ENCODE measurements at regions of chr12 and their contacts with region 1.

Region 1: GRCh38 chr12:124453419-124454351 is 113.7 kb downstream of the NCOR2 start:
- H3K4me3 Mint-ChIP-seq: peak overlapping the region; percentile 39
- H3K27ac Mint-ChIP-seq: peak overlapping the region; percentile 75
- H3K4me1 Mint-ChIP-seq: peaks cover 69% of the 10 kb centered on the region
- H3K27me3 Mint-ChIP-seq: no peaks in the 10 kb centered on the region

Region 2: DNA sequence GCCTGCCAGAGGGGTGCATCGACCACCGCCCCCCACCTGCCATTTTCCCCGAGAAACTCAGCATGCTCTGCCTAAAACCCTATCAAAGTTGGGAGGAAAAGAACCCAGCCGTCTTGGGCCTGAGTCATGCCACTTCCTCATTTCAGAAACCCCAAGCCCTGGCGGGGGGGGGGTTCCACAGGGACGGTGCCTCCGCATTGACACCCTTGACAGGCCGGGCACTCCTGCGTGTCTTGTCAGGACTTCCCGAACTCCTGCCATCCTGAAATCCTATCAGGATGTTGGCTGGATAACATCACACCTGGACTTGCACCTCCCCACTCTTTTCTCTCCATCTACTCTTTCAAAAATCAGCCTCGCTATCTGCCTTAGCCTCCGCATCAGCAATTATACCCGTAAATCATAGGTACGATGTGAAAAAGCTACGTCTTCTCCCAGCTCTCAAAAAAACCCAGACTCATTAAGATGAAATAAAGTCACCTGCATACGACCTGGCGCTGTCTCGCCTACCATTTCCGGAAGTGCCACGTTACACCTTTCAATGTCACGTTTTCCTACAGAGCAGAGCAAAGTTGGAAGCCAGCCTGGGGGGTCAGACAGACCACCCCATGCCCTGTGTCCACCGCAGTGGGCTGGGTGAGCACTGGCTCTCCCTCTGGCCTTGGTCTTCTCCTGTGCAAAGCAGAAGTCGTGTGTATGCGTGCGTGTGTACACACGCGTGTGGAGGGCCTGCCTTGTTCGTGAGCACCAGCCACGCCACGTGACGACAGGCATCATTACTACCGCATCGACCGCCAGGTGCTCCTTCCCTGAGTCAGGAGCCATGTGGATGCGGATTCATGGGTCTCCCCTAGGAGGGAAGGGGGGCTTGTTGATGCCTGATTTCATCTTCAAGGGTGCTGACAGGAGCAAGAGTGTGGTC is 62.1 kb before region 1 on chr12:
- intact Hi-C with region 1: loop called (anchors 5 kb)
- H3K4me3 Mint-ChIP-seq: peak overlapping the region; percentile 99
- H3K27ac Mint-ChIP-seq: peak overlapping the region; percentile 94
- H3K4me1 Mint-ChIP-seq: peaks cover 94% of the 10 kb centered on the region
- H3K27me3 Mint-ChIP-seq: no peaks in the 10 kb centered on the region

Region 3: GRCh38 chr12:124506145-124506831 is 52.6 kb after region 1 on chr12:
- intact Hi-C with region 1: loop called (anchors 5 kb)
- H3K4me3 Mint-ChIP-seq: peak overlapping the region; percentile 75
- H3K27ac Mint-ChIP-seq: peak overlapping the region; percentile 92
- H3K4me1 Mint-ChIP-seq: peaks cover 96% of the 10 kb centered on the region
- H3K27me3 Mint-ChIP-seq: no peaks in the 10 kb centered on the region

Region 4: GRCh38 chr12:124551268-124552144 is 97.8 kb after region 1 on chr12:
- intact Hi-C with region 1: loop called (anchors 1 kb)
- H3K4me3 Mint-ChIP-seq: peak overlapping the region; percentile 78
- H3K27ac Mint-ChIP-seq: peak overlapping the region; percentile 98
- H3K4me1 Mint-ChIP-seq: peaks cover 100% of the 10 kb centered on the region
- H3K27me3 Mint-ChIP-seq: no peaks in the 10 kb centered on the region

Region 5: DNA sequence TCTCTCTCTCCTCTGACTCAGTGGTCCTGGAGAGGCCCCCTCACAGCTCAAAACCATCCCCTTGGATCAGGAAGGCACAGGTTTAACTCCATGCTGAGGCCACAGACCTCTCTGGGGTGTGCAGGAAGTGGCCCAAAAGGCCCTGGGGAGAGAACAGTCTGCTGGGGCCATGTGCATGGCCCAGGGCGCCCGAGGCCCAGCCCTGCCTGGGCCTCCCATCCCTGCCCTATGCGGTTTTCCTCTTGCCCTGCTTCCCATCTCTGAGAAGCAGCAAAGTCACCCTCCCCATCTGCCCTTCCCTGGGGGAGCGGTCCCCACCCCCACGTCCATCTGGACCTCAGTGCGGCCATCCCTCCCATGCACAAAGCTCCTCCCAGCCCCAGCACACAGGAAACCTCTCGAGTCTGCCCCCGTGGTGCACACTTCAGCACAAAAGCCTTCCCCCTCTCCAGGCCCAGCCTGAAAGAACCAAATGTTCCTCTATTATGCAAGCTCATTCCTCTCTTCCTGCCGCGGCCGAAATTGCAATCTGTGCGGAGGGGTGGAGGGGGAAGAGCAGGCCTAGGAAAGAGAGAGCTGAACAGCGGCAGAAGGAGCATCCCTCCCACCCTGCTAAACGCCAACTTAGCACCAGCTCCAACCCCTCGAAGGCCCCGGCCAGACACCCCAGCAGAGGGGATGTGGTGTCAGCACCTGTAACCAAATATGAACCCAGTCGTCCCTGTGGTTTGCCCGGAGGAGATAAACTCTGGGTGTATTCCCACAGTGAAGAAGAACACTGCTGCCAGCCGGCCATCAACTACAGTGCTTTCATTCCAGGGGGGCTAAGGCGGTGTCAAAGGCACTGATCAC is 301.5 kb after region 1 on chr12:
- intact Hi-C with region 1: no loop called
- H3K4me3 Mint-ChIP-seq: peak overlapping the region; percentile 54
- H3K27ac Mint-ChIP-seq: peak overlapping the region; percentile 86
- H3K4me1 Mint-ChIP-seq: peaks cover 96% of the 10 kb centered on the region
- H3K27me3 Mint-ChIP-seq: peaks cover 3% of the 10 kb centered on the region

Measured in dendritic cell treated with granulocyte-macrophage colony-stimulating factor and Interleukin-4, amounts not matched to agents 40 ng/mL and 50 ng/mL, for 4 days (primary cell).